Prostate gland (tissue), 2 donors: ENCODE measurements at regions of chr16 and their contacts with region 1.

Region 1: GRCh38 chr16:77585379-77586251 is 136.7 kb upstream of the NUDT7 start:
- DNase-seq: no peak
- H3K4me3 ChIP-seq: no peak overlapping the region
- H3K27ac ChIP-seq: no peak overlapping the region
- H3K4me1 ChIP-seq: no peaks in the 10 kb centered on the region
- H3K27me3 ChIP-seq: no peaks in the 10 kb centered on the region
- CTCF ChIP-seq: no peak
- POLR2A ChIP-seq: no peak

Region 2: GRCh38 chr16:77236063-77236511 is 349.5 kb before region 1 on chr16:
- intact Hi-C with region 1: loop called (anchors 1 kb)
- DNase-seq: peak; percentile 82
- H3K4me3 ChIP-seq: no peak overlapping the region
- H3K27ac ChIP-seq: no peak overlapping the region
- H3K4me1 ChIP-seq: no peaks in the 10 kb centered on the region
- H3K27me3 ChIP-seq: no peaks in the 10 kb centered on the region
- CTCF ChIP-seq: peak; percentile 85 to 100 (median 100)
- POLR2A ChIP-seq: no peak

Region 3: GRCh38 chr16:77637940-77638339 is 52.3 kb after region 1 on chr16:
- intact Hi-C with region 1: no loop called
- DNase-seq: no peak
- H3K4me3 ChIP-seq: no peak overlapping the region
- H3K27ac ChIP-seq: no peak overlapping the region
- H3K4me1 ChIP-seq: no peaks in the 10 kb centered on the region
- H3K27me3 ChIP-seq: no peaks in the 10 kb centered on the region
- CTCF ChIP-seq: no peak
- POLR2A ChIP-seq: no peak